ENCODE measurements at regions of chr13 and their contacts with region 1.

Region 1: GRCh38 chr13:87671031-87671752 is at the start of gene SLITRK5:
- DNase-seq: peak in 1 of 2 donors; percentile 64
- H3K4me3 ChIP-seq: peak within 1 kb of the TSS; percentile 36 to 68 (median 57)
- H3K27ac ChIP-seq: no peak within 1 kb of the TSS
- H3K4me1 ChIP-seq: no peaks in the 10 kb centered on the region
- H3K27me3 ChIP-seq: peaks cover 0 to 48% of the 10 kb centered on the region in 2 donors
- CTCF ChIP-seq: peak; percentile 13 to 49 (median 46)
- POLR2A ChIP-seq: no peak
- total RNA-seq, gene SLITRK5: under 0.01 to 0.73 (median 0.66) TPM

Region 2: DNA sequence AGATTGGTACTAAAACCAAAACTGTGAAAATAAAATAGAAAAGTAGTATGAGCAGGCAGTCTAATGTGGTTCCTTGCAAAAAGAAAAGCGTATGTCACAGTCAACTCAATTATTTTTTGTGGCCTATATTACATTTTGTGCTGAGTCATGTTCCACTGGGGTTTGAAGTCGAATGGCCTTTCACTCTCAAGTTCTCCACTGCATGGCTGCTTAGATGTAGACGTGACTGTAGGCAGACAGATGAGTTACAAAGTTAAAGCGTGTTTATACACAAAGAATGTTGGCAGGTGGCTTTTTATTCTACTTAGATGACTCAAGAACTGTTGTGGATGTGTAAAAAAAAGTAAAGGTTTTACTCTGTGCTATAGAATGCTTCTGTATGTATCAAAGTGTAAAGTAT is 2005.9 kb before region 1 on chr13:
- intact Hi-C with region 1: loop called (anchors 10 kb)
- DNase-seq: no peak
- H3K4me3 ChIP-seq: no peak overlapping the region
- H3K27ac ChIP-seq: no peak overlapping the region
- H3K4me1 ChIP-seq: no peaks in the 10 kb centered on the region
- H3K27me3 ChIP-seq: no peaks in the 10 kb centered on the region
- CTCF ChIP-seq: no peak
- POLR2A ChIP-seq: no peak

Region 3: GRCh38 chr13:88802886-88803285 is 1131.7 kb after region 1 on chr13:
- intact Hi-C with region 1: loop called (anchors 10 kb)
- DNase-seq: no peak
- H3K4me3 ChIP-seq: no peak overlapping the region
- H3K27ac ChIP-seq: no peak overlapping the region
- H3K4me1 ChIP-seq: no peaks in the 10 kb centered on the region
- H3K27me3 ChIP-seq: no peaks in the 10 kb centered on the region
- CTCF ChIP-seq: no peak
- POLR2A ChIP-seq: no peak

Measured in breast epithelium (tissue), 4 donors.